ENCODE measurements at regions of chr17 and their contacts with region 1.

Region 1: GRCh38 chr17:4366327-4367063 is at the start of gene UBE2G1:
- DNase-seq: peak; percentile 99
- total RNA-seq, gene UBE2G1: 80.4 TPM

Region 2: GRCh38 chr17:4143563-4144421 is 222.7 kb before region 1 on chr17:
- intact Hi-C with region 1: loop called (anchors 5 kb)
- DNase-seq: peak; percentile 95

Region 3: DNA sequence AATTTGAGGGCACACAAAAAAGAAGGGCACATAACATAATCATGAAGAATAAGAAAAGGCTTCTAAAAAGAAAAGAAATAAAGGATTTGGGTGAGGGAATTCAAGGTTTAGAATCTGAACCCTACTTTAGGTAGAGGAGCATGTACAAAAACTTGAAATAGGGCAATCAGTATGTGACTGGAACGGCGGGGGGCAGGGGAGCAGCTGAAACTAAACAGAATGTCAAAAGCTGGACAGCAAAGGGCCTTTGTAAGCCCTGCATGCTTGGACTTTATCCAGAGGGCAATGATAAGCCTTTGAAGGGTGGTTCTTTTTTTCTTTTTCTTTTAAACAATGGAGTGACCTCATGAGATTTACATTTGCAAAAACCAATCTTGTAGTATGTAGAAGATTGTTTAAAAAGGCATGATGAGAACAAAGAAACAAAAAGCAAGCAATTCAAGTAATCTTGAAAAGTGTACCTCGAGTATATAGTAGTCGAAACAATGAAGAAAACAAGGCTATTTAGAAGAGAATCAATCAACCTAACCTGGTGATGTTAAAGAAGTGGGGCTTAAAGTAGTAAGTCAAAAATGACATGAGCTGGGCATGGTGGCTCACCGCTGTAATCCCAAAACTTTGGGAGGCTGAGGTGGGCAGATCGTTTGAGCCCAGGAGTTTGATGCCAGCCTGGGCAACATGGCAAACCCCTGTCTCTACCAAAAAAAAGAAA is 56.0 kb before region 1 on chr17:
- intact Hi-C with region 1: loop called (anchors 5 kb)
- DNase-seq: no peak